AG04449 (cell line): ENCODE measurements at regions of chr10 and their contacts with region 1.

Region 1: DNA sequence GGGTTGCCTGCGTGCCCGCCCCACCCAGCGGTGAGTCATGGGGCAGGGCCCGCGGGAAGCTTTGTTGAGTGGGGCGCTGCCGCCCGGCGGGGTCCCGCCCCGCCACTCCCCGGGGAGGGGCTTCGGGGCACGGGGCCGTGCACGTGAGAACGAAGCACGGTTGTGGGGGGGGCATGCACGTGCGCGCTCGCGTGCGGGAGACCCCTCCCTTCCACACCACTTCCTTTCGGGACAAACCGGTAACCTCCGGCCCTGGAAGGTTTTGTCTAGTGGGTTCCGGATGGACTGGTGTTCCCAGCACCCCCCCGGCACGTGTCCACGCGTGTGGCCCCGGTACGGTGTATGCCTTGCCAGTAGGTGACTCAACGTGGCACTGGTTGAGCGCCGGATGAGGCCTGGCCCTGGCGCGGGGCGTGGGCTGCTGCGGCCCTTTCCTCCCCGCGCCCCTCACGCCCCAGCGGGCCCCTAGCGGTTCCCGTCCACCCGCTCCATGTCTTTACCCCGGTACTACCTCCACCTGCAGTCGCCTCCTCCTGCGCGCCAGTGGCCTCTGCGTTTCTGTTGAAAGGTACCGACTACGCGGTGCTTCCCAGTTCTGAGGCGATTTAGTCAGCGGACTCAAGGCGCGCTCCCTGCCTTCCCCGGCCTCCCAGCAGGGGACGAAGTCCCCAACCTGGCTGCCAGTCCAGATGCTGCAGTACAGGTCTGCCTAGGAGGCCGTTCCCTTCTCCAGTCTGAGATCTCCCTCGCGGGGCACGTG is 3.1 kb downstream of the ADIRF start:
- DNase-seq: no peak
- H3K4me3 ChIP-seq: peak overlapping the region; percentile 65
- CTCF ChIP-seq: peak; percentile 3

Region 2: DNA sequence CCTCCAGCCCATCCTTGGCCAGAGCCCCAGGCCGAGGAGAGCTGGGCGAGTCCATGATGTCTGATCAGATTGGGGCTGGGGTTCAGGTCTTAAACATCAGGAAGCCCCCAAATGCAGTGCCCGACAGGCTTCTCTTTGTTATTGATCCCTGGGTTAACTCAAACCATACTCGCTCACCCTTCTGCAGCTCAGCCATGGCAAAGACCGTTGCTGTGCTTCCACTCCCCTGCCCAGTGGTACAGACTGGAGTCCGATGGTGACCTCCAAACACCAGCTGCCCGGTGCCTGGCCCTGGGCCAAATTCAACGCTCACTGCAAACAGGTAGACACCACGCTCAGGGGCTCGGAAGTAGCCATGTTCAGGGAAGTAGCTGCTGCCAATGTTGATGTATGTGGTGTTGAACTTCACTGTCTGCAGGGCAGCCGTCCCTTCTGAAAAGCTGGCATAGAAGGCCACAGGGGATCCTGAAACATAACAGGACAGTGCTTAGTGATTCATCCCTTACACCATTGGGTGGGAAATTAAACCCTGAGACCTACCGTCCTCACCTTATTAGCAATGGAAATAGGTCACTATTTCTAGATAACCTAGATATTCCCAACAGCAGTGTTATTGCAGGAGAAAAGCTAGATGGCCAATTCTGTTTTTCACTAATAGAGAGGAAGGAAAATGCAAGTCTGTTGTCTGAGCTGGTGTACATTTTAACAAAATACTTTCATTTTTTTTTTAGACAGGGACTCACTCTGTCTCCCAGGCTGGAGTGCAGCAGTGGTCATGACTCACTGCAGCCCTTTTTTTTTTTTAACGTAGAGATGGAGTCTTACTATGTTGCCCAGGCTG is 34.5 kb before region 1 on chr10:
- CTCF ChIA-PET with region 1: interaction called, 56 read pairs
- POLR2A ChIA-PET with region 1: no interaction called
- DNase-seq: no peak
- H3K4me3 ChIP-seq: no peak overlapping the region
- CTCF ChIP-seq: no peak

Region 3: DNA sequence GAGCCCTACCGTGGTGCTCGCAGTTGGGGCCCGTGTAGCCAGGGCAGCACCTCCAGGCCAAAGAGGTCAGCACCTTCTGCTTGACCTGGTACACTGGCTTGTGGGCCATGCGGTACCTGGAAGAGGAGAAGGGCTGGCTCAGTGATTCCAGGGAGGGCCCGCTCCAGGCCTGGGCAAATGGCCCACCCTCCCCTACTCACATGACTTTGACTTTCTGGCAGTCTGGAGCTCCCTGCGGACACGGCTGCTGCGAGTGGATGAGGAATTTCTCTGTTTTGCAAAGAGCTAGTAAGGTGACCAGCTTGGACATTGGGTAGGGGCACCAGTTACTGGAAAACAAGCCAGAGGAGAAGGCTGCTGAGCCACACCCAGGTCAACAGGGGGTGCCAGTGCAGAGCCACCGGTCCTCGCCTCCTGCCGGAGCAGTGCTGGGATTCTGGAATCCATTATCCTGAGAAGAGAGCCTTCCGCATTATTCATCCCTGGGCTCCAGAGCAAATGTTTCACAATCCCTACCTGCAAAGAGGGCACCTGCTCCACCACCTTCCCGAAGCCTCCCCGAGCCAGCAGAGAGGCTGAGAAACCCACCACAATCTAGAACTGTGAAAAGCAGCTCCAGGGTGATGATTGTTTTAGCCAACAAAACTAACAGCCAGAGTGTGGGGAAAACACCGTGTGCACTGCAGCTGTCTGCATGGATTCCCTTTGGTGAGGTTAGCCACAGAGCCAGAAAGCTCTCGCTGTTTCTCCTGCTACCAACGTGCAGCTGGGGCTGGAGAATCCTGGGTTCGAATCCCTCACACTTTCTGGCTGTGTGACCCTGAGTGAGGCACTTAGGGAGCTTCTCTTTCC is 25.8 kb before region 1 on chr10:
- CTCF ChIA-PET with region 1: interaction called, 24 read pairs
- POLR2A ChIA-PET with region 1: interaction called, 3 read pairs
- DNase-seq: no peak
- H3K4me3 ChIP-seq: no peak overlapping the region
- CTCF ChIP-seq: peak; percentile 55

Region 4: DNA sequence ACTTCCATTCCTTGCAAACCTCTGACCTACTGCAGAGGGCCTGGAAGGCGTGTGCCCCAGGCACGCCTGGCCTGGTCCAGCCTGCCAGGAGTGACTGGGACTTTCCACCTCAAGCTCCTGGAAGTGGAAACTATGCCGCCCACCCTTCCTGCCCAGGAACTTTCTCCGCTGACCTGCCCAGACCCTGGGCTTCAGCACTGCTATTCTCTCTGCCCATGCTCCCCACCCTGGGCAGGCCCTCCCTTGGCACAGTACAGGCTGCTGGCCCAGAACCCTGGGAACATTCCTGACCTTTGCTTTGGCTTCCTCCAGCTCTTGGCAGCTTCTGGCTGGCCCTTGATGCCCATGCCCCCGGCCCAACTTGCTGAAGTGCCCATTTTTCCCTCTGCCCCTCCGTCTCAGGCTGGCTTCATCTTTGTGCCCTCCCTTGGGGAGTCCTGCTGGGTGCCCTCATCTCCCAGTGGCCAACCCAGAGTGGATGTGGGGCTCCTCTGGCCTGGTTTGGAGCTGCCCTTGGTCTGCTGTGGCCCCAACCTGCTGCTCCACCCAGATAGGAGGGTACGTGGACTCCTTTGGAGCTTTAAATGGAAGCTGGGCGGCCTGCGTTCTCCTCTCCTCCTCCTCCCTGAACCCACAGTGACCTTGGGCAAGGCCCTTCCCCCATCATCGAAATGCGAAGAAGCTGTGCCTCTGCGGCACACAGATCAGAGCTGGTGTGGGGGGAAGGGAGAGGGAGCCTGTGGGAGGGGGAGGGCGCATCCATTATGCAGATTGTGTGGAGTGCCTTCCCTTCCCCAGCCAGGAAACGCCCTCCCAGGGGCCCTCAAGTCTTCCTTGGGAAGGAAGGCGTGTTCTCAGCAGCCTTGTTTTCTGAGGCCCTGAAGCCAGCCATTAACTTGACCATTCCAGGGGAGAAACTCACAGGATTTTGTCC is 17.4 kb before region 1 on chr10:
- CTCF ChIA-PET with region 1: interaction called, 79 read pairs
- POLR2A ChIA-PET with region 1: interaction called, 4 read pairs
- DNase-seq: no peak
- H3K4me3 ChIP-seq: no peak overlapping the region
- CTCF ChIP-seq: no peak

Region 5: GRCh38 chr10:86960003-86960862 is 11.2 kb before region 1 on chr10:
- CTCF ChIA-PET with region 1: interaction called, 79 read pairs
- POLR2A ChIA-PET with region 1: interaction called, 4 read pairs
- DNase-seq: no peak
- H3K4me3 ChIP-seq: no peak overlapping the region
- CTCF ChIP-seq: peak; percentile 93